Tibial artery (tissue), 4 donors: ENCODE measurements at regions of chr5 and their contacts with region 1.

Region 1: DNA sequence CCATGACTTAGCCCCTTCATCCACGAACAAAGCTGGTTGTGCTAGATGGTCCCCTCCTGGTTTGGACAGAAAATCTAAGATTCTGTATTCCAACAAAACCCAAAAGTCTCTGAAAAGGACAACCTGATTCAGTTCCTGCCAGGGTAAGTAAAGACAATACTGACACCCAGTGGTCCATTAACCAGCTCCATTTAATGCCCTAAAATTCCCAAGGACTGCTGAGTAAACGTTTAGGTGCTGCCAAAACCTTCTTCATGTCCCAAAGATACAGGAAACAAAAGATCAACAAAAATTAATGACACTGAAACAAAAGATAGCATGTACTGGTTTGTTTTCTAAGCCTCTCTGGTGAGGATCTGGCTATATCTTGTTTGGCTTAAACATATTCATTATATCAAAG is 25.3 kb upstream of the PPP1R2B start:
- DNase-seq: no peak
- H3K4me3 ChIP-seq: no peak overlapping the region
- H3K27ac ChIP-seq: no peak overlapping the region
- H3K4me1 ChIP-seq: no peaks in the 10 kb centered on the region
- H3K27me3 ChIP-seq: no peaks in the 10 kb centered on the region
- CTCF ChIP-seq: peak; percentile 42 to 51

Region 2: GRCh38 chr5:155616779-155617392 is 1207.9 kb before region 1 on chr5:
- intact Hi-C with region 1: loop called (anchors 10 kb)
- DNase-seq: peak in 1 of 2 donors; percentile 23
- H3K4me3 ChIP-seq: no peak overlapping the region
- H3K27ac ChIP-seq: no peak overlapping the region
- H3K4me1 ChIP-seq: no peaks in the 10 kb centered on the region
- H3K27me3 ChIP-seq: peaks cover 0 to 2% of the 10 kb centered on the region in 2 donors
- CTCF ChIP-seq: peak; percentile 25 to 38

Region 3: DNA sequence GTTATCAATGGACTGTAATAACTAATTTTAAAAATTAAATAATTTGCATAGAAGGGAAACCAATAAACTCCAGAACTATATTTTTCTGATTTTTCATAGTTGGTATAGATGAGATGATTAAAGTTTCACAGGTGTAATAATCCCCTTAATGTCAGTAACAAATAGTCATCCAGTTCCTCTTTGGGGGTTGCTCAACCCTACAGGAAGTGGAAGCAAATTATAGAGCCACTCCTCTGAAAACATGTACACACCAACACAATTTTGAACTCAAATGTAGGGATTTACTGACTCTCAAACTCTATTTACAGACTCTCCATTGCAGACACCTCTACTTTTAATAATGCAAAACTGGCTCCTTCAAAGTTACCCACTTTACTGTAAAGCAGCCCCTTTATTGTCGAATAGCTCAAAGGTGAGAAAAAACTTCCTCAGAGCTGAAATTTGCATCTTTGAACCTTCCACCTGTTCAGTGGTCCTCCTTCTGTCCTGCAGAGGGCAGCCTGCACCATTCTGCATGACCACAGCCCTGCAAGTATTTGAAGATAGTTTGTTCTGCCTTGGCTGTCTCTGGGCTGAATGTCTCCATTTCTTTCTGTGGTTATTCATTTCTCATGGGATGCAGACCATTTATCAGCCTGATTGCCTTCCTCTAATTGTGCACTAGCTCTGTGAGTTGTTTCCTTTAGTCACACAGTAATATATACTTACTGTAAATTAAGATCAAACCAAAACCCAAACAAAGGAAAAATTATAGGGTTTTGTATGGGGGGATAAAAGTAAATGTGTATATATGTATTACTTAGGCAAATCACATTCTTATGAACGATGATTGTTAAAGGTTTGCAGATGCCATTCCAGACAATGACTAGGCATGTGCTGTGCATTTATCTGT is 881.0 kb before region 1 on chr5:
- intact Hi-C with region 1: loop called (anchors 5 kb)
- DNase-seq: no peak
- H3K4me3 ChIP-seq: no peak overlapping the region
- H3K27ac ChIP-seq: no peak overlapping the region
- H3K4me1 ChIP-seq: no peaks in the 10 kb centered on the region
- H3K27me3 ChIP-seq: no peaks in the 10 kb centered on the region
- CTCF ChIP-seq: peak; percentile 75 to 77